ENCODE measurements at regions of chr4 and their contacts with region 1.

Region 1: DNA sequence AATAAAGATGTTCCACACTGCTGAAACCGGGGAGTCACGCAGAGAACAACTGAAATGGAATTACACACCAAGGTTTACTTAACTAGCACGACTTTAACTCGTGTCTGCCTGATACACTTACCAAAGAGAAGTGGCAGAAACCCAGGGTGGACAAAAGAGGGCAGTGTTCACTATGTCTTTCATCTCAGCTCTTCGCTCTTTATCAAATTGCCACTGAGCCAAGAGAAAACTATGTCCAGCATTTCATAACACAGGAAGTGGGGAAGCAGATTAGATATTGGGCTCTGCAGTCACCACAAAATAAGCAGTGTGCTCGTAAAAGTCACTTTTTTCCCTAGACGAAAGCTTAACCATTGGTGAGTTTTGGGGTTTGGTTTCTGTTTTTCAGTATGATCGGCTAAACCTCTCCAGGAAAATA is 155.7 kb downstream of the CHIC2 start:
- DNase-seq: peak in 3 of 10 donors; percentile 8 to 42 (median 36)
- H3K4me3 ChIP-seq: peak overlapping the region in 54 of 59 donors; percentile 0 to 61 (median 34)
- H3K27ac ChIP-seq: no peak overlapping the region
- H3K27me3 ChIP-seq: peaks cover 0 to 40% (median 4%) of the 10 kb centered on the region in 45 donors
- CTCF ChIP-seq: peak; percentile 42 to 81 (median 70)

Region 2: DNA sequence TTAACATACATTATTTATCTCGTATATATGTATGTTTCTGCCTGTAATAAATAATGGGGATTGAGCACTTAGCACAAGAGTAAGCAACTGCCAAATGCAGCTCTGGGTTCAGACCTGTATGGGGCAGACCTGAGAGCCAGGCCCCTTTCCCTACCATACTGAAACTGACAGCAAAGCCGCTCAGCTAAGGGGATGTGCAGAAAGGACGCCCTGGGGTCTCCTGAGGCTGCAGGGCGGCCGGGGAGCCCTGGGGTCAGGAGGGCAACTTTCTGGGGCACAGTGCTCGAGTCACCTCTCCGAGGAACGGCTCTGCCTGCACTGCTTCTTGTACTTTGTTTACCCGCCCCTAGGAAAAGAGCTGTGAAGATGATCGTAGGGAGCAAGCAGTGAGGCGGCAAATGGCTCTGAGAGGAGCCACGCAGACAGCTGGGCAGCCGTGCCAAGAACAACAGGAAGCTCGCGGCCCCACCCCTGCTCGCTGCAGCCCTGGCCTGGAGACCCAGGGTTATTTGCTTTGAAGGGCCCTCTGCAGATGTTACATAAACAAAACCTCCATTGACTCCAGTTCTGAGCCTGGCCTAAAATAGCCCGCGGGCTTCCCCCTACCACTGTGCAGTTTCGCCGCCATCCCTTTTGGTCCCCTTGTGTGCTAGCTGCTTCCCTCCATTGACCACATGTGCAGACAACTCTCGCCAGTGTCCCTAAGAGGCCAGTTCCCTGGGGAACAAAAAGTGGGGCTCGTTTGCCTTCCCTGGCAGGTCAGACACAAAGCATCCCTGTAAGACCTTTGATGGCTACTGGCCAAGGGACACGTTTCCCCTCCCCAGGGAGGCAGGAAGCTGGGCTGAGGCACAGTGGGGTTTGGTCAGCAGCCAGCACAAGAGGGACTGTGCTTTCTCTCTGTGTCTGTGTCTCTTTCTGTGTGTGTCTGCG is 206.1 kb before region 1 on chr4:
- intact Hi-C with region 1: loop called in 1 of 2 experiments (anchors 10 kb)
- DNase-seq: peak in 9 of 10 donors; percentile 19 to 62 (median 50)
- H3K4me3 ChIP-seq: peak overlapping the region in 58 of 59 donors; percentile 1 to 72 (median 46)
- H3K27ac ChIP-seq: peak overlapping the region in 30 of 59 donors; percentile 4 to 71 (median 51)
- H3K27me3 ChIP-seq: peaks cover 0 to 3% (median 0%) of the 10 kb centered on the region in 45 donors
- CTCF ChIP-seq: peak in 4 of 56 donors; percentile 6 to 31 (median 18)

Region 3: GRCh38 chr4:53714236-53715140 is 194.2 kb before region 1 on chr4:
- intact Hi-C with region 1: loop called (anchors 10 kb)
- DNase-seq: no peak
- H3K4me3 ChIP-seq: no peak overlapping the region
- H3K27ac ChIP-seq: no peak overlapping the region
- H3K27me3 ChIP-seq: no peaks in the 10 kb centered on the region
- CTCF ChIP-seq: no peak

Region 4: GRCh38 chr4:53929955-53930798 is 21.5 kb after region 1 on chr4:
- intact Hi-C with region 1: loop called in 1 of 2 experiments (anchors 2 kb)
- DNase-seq: peak in 9 of 10 donors; percentile 55 to 82 (median 64)
- H3K4me3 ChIP-seq: peak overlapping the region in 14 of 59 donors; percentile 7 to 39 (median 25)
- H3K27ac ChIP-seq: no peak overlapping the region
- H3K27me3 ChIP-seq: peaks cover 0 to 8% (median 0%) of the 10 kb centered on the region in 45 donors
- CTCF ChIP-seq: peak; percentile 53 to 91 (median 82)

Region 5: DNA sequence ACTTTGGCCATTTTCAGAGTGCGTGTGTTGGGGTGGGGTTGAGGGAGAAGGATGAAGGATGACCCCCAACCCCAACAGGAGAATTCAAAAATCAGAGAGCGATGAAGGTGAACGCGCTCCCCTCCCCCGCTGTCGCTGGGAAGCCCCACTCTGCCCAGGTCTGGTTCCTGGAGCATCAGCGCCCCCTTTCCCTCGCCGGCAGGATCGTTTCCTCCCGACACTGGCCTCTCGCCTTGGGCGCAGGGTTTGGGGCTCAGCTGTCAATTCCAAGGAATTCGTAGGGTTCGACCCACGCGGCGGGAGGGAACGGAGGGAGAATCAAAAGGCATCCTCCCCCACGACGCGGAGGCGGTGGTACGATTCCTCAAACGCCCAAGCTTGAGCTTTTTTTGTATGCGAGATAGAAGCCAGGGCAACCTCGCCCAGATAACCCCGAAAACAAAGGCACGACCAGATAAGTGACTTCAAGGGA is 319.4 kb after region 1 on chr4:
- intact Hi-C with region 1: loop called (anchors 2 to 5 kb)
- DNase-seq: peak in 5 of 10 donors; percentile 15 to 65 (median 58)
- H3K4me3 ChIP-seq: peak overlapping the region; percentile 14 to 67 (median 46)
- H3K27ac ChIP-seq: peak overlapping the region in 2 of 59 donors; percentile 10 to 59
- H3K27me3 ChIP-seq: peaks cover 6 to 100% (median 91%) of the 10 kb centered on the region in 45 donors
- CTCF ChIP-seq: peak in 55 of 56 donors; percentile 24 to 73 (median 60)

Measured in dorsolateral prefrontal cortex (tissue), 120 donors.